Aorta (tissue), 5 donors: ENCODE measurements at regions of chr10 and their contacts with region 1.

Region 1: DNA sequence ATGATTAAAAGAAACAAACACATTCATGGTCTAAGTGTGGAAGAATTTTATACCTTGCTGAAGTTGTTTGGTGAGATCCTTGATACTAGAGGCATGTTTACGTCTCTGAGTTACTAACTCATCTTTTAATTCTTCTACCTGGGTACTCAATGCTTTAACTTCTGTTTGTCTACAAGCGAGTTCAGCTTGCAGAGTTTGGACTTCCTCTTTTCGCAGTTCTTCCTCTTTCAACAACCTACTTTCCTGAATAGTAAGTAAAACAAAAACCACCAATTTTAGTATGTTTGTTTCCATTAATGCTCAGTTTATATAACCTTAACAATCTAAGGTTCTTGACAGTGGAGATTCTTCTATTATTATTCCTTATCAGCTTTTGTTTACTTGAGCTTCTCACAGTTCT is 42.9 kb downstream of the CCDC186 start:
- DNase-seq: no peak
- ATAC-seq: no peak
- H3K4me3 ChIP-seq: no peak overlapping the region
- H3K27ac ChIP-seq: no peak overlapping the region
- H3K4me1 ChIP-seq: no peaks in the 10 kb centered on the region
- H3K27me3 ChIP-seq: no peaks in the 10 kb centered on the region

Region 2: DNA sequence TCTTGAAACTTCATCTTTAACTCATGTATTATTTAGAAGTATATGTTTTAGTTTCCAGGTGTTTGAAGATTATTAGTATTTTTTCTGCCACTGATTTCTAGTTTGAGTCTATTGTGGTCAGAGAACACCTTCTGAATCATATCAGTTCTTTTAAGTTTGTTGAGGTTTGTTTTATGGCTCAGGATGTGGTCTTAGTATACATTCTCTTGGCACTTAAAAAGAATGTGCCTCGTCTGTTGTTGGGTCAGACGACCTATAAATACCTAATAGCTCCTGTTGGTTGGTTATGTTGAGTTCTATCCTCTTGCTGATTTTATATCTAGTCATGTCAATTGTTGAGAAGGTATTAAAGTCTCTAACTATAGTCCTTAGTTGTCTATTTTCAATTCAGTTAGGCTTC is 64.0 kb after region 1 on chr10:
- intact Hi-C with region 1: loop called in 1 of 2 experiments (anchors 2 kb)
- DNase-seq: no peak
- ATAC-seq: no peak
- H3K4me3 ChIP-seq: no peak overlapping the region
- H3K27ac ChIP-seq: no peak overlapping the region
- H3K4me1 ChIP-seq: no peaks in the 10 kb centered on the region
- H3K27me3 ChIP-seq: no peaks in the 10 kb centered on the region